ENCODE measurements at regions of chr2 and their contacts with region 1.

Region 1: DNA sequence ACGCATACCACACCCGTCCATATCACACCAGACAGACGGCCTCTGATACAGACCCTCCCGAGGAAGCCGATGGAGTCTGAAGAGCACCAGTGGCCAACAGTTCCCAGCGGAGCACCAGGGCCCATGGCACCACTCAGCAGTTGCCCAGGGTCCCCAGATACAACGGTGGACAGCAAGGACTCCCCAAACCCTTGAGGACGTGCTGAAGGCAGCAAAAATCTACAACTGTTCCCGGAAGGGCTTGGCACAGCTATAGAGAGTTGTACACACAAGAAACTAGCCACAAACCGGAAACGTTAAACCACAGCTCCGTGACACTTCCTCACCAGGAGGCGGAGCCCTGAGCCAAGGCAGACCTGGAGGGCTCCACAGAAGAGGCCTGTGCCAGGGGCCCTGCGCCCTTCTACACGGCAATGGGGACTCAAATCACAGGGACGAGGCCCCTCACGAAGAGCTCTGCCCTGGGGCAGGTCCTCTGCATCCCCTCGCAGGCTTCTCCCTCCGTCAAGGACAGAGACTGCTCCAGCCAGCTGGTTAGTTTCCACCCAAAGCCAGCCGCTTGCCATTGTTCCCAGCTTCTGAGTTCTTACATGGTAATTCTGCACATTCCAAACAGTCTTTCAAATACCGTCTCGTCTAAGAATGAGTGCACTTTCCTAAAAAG is 133.4 kb downstream of the HDAC4 start:
- DNase-seq: peak; percentile 91
- H3K4me3 ChIP-seq: peak overlapping the region; percentile 55
- H3K27ac ChIP-seq: no peak overlapping the region
- H3K4me1 ChIP-seq: peaks cover 35% of the 10 kb centered on the region
- CTCF ChIP-seq: peak; percentile 67

Region 2: GRCh38 chr2:239369631-239370161 is 102.3 kb after region 1 on chr2:
- CTCF ChIA-PET with region 1: no interaction called
- POLR2A ChIA-PET with region 1: no interaction called
- intact Hi-C with region 1: loop called (anchors 1 kb)
- DNase-seq: peak; percentile 73
- H3K4me3 ChIP-seq: no peak overlapping the region
- H3K27ac ChIP-seq: no peak overlapping the region
- H3K4me1 ChIP-seq: peaks cover 17% of the 10 kb centered on the region
- CTCF ChIP-seq: no peak